GM10248 (cell line): ENCODE measurements at regions of chr5 and their contacts with region 1.

Region 1: DNA sequence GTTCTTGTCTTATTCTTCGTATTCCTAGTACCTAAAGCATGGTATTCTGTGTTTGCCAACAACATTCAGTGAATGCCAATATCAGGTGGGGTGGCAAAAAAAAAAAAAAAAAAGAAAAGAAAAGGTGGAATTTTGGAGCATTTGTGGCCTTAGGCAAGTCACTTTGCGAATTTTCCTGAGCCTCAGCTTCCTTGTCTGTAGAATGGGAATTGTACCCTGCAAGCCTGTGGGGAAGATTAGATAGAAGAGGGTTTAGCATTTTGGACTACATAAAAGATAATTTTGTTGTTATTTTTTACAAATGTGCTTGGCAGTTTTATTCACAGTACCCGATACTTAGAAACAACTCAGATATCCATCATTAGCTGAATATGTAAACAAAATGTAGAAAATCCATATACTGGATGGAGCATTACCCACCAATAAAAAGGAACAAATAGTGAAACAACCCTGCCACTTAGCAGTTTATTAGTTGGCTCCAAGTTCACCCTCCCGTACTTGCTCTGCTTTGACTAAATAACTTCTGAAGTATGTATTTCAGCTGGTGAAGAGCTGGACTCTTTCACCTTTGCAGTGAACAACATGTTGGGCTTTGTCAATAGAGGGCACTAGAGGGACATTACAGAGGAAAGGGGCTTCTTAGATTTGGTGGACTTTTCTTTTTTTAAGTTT is 13.6 kb downstream of the UBE2D2 start:
- DNase-seq: no peak
- CTCF ChIP-seq: peak; percentile 70

Region 2: DNA sequence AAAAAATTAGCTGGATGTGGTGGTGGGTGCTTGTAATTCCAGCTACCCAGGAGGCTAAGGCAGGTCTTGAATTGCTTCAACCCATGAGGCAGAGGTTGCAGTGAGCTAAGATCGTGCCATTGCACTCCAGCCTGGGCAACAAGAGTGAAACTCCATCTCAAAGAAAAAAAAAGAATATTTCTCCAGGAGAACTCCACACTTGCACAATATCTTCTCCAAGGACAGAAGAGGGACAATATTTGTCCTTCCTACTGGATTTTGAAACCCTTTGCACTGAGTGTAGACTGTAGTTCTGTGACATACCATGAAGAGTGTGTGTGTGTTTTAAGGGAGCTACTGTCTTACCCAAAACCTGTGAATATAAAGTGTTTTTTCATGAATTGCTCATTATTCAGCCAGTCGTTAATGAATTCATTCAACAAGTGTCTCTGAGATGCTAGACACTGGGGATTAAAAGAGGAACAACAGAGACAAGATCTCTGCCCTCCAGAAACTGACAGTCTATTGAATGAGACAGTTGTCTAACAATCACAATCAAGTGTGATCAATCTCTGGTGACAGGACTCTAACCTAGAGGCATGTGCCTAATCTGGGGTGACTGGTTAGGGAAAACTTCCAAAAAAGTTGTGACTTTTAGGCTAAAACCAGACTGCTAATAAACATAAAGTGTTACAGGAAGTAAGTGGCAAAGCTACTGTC is 23.4 kb before region 1 on chr5:
- CTCF ChIA-PET with region 1: interaction called, 11 read pairs
- POLR2A ChIA-PET with region 1: interaction called, 4 read pairs
- DNase-seq: no peak
- CTCF ChIP-seq: no peak

Region 3: DNA sequence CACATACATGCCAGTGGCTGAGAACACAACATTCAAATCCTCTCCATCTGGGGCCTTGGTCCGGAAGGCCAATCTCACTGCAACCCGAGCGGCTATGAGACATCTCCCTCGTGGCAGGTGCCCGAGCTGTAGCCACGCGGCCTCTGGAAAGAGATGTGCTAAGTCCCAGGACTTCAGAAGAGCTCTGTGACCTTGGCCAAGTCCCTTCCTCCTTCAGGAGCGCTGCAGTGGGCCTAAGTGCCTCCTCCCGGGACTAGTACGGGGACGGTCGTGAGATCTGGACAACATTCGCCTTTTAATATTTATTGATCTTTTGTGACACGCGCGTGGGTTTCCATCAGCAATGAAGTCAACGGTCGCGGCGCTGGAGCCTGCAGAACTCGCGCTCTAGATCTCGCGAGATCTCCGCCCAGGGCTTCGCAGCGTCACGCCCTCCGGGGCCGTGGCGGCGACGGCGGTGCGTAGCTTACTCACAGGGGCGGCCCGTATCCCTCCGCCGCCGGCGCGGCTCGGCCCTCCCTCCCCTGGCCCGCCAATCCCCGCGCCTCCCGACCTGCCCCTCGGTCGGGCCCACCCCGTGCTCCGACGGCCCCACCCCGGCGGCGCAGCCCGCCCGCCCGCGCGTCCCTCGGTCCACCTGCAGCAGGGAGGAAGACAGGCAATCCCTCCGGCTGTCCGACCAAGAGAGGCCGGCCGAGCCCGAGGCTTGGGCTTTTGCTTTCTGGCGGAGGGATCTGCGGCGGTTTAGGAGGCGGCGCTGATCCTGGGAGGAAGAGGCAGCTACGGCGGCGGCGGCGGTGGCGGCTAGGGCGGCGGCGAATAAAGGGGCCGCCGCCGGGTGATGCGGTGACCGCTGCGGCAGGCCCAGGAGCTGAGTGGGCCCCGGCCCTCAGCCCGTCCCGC is 13.8 kb before region 1 on chr5 and contains the start of gene UBE2D2:
- CTCF ChIA-PET with region 1: interaction called, 63 read pairs
- POLR2A ChIA-PET with region 1: interaction called, 5 read pairs
- DNase-seq: peak; percentile 96
- CTCF ChIP-seq: no peak

Region 4: GRCh38 chr5:139592289-139592688 is 17.5 kb after region 1 on chr5:
- CTCF ChIA-PET with region 1: interaction called, 44 read pairs
- POLR2A ChIA-PET with region 1: interaction called, 5 read pairs
- DNase-seq: peak; percentile 26
- CTCF ChIP-seq: no peak

Region 5: GRCh38 chr5:140107312-140108083 is 532.7 kb after region 1 on chr5:
- CTCF ChIA-PET with region 1: no interaction called
- POLR2A ChIA-PET with region 1: no interaction called
- DNase-seq: peak; percentile 93
- CTCF ChIP-seq: peak; percentile 14